Aorta (tissue), 5 donors: ENCODE measurements at regions of chr4 and their contacts with region 1.

Region 1: GRCh38 chr4:122922877-122923511 is 597 bp upstream of the NUDT6 start:
- DNase-seq: peak; percentile 91 to 93
- ATAC-seq: peak; percentile 95
- H3K4me3 ChIP-seq: peak overlapping the region; percentile 71 to 73
- H3K27ac ChIP-seq: peak overlapping the region in 1 of 2 donors; percentile 68
- H3K4me1 ChIP-seq: peaks cover 0 to 1% of the 10 kb centered on the region in 2 donors
- H3K27me3 ChIP-seq: no peaks in the 10 kb centered on the region

Region 2: DNA sequence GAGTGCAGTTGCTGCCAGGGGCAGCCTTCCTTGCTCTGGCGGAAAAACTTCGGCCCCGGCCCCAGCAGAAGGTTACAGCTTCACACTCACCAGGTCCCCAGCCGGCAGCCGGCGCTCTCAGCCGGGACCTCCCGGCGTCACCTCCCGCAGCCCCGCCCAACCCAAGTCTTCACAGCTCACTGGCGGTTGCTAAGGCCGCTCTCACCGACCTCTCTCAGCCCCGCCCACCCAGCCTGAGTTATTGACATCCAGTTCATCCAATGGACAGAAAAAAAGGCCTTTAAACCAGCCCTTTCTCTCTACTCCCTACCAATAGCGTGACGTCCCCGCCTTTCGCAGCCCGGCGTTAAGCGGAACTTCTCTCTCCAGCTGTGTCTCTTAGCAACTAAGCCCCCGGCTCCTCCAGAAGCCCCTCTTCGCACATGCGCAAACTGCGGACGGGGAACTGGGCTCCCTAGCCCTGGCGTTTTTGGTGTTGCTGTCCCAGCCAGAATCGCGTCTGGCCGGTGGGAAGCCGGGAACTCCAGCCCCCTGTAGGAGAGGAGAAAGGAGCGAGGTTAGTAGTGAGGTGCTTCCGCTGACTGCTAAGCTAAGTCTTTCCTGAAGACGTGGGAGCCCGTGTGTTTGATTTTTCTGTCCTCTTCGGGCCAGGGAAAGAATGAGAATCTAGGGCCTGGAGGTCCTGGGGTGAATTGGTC is 190.5 kb before region 1 on chr4 and contains the start of gene BBS12:
- intact Hi-C with region 1: loop called in 1 of 2 experiments (anchors 2 kb)
- DNase-seq: peak; percentile 99
- ATAC-seq: peak; percentile 100
- H3K4me3 ChIP-seq: peak within 1 kb of the TSS; percentile 71 to 84
- H3K27ac ChIP-seq: peak within 1 kb of the TSS; percentile 69 to 74
- H3K4me1 ChIP-seq: no peaks in the 10 kb centered on the region
- H3K27me3 ChIP-seq: no peaks in the 10 kb centered on the region
- total RNA-seq, gene BBS12: 3.2 to 3.8 TPM

Region 3: DNA sequence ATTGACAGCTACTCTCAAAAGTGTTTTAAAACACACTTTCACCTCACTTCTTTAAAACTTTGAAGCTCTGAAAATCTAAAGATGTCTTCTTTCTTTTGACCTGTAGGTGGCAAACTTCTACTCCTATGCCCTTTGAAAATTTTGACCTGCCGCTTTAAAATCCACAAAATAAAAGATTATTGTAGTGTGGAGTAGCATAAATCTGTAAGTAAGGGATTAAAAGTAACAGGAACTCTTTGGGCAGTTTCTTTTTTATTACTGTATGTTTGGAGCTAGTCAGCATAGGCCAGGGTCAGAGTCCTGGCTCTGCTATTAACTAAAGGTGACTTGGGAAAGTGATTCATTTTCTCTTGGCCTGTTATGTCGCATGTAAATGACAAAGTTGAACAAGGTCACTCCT is 165.0 kb before region 1 on chr4:
- intact Hi-C with region 1: loop called (anchors 2 to 5 kb)
- DNase-seq: no peak
- ATAC-seq: no peak
- H3K4me3 ChIP-seq: no peak overlapping the region
- H3K27ac ChIP-seq: no peak overlapping the region
- H3K4me1 ChIP-seq: no peaks in the 10 kb centered on the region
- H3K27me3 ChIP-seq: no peaks in the 10 kb centered on the region

Region 4: DNA sequence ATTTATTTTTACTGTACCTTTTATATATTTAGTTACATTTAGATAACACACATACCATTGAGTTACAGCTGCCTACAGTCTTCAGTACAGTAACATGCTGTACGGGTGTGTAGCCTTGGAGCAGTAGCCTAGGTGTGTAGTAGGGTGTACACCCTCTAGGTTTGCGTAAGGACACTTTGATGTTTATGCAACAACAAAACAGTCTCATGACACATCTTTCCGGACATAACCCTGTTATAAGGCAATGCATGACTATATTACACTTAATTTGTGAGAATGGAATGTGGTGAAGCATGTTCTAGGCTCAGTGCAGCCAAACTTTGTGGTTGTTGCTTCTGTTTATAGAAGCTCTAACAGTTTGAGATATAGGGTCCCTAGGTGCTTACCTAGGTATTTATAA is 539.0 kb after region 1 on chr4:
- intact Hi-C with region 1: no loop called
- DNase-seq: no peak
- ATAC-seq: no peak
- H3K4me3 ChIP-seq: no peak overlapping the region
- H3K27ac ChIP-seq: no peak overlapping the region
- H3K4me1 ChIP-seq: no peaks in the 10 kb centered on the region
- H3K27me3 ChIP-seq: no peaks in the 10 kb centered on the region